Left cardiac atrium (tissue), 4 donors: ENCODE measurements at regions of chr14 and their contacts with region 1.

Region 1: DNA sequence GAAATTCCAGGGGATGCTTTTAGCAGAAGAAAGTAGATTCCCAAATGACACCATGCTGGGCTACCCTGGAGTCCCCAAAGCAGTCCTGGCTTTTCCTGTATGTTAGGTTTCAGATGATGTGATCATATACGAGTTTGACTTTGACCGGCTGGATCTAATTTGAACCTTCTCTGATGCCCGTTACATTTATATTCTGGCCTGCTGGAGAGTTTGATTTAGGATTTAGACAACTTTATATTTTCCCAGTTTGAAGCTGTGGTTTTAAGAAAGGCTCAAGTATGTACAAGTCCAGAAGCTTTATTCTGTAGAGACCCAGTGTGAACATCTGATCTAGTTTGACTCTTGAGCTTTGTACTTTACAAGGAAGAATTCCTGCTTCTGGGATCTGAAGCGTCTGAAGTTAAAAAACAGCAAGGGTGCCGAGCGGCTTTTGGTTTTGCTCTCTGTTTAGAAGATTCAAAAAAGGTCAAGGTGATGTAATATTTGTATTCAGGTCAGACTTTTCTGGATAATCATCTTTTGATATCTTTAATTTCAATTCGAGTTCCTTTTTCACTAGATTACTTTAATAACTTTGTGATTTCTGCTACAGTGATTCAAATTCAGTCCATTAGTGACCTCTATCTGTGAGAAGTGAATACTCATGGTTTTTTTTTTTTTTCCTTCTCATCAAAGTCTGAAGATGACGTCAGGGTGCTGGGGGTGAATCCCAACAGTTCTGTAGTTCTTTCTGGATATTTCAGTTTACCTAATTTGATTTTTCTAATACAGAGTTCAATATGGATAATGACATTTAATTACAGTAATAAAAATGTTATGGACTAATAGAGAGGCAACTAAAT is 6.3 kb downstream of the FLRT2 start:
- DNase-seq: no peak
- ATAC-seq: peak in 1 of 2 donors; percentile 24

Region 2: GRCh38 chr14:84493779-84494178 is 1042.4 kb before region 1 on chr14:
- intact Hi-C with region 1: loop called in 1 of 2 experiments (anchors 5 kb)
- DNase-seq: no peak
- ATAC-seq: no peak

Region 3: DNA sequence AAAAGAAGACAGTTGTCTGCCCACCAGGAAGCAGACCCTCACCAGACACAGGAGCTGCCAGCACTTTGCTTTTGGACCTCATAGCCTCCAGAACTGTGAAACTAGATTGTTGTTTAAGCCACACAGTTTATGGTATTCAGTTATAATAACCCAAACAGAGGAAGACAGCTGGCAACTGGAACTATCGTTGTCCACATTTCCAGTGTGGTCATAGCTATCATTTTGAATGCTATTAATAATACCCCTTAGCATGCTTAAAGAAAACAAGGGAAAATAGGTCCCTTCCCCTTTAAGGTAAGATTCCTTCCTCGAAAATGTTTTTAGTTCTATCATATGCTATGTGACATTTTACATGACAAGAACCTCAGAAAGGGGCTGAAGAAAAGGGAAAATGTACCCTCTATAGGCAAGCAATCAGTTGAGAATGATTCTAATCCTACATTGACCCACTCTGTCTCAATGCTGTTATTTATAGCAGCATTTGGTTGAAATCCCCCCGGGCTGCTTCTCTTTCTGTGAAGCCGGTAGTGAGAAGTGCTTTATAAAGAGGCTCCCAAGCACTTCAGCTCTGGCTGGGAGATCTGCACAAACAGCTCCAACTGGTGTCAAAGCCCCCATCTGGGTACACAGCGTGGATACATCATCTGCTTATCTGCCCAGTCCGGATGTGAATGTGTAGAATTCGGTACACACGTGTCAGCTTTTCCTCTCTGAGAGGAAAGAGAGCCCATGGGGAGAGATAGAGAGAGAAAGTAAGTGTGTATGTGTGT is 227.5 kb before region 1 on chr14:
- intact Hi-C with region 1: no loop called
- DNase-seq: no peak
- ATAC-seq: no peak